Activated CD4-positive, alpha-beta memory T cell treated with anti-CD3 and anti-CD28 coated beads for 36 hours (primary cell): ENCODE measurements at regions of chr1 and their contacts with region 1.

Region 1: GRCh38 chr1:61724813-61725694 is at the start of gene TM2D1:
- DNase-seq: peak; percentile 93
- H3K4me3 Mint-ChIP-seq: peak within 1 kb of the TSS; percentile 98
- H3K27ac Mint-ChIP-seq: peak within 1 kb of the TSS; percentile 99
- H3K4me1 Mint-ChIP-seq: peaks cover 18% of the 10 kb centered on the region
- H3K27me3 Mint-ChIP-seq: no peaks in the 10 kb centered on the region
- total RNA-seq, gene TM2D1: 29.7 to 34.3 TPM

Region 2: GRCh38 chr1:61741711-61742619 is 16.9 kb after region 1 on chr1 and contains the start of gene PATJ:
- CTCF ChIA-PET with region 1: no interaction called
- POLR2A ChIA-PET with region 1: no interaction called
- intact Hi-C with region 1: loop called (anchors 1 kb)
- DNase-seq: peak; percentile 74
- H3K4me3 Mint-ChIP-seq: peak within 1 kb of the TSS; percentile 90
- H3K27ac Mint-ChIP-seq: peak within 1 kb of the TSS; percentile 78
- H3K4me1 Mint-ChIP-seq: peaks cover 24% of the 10 kb centered on the region
- H3K27me3 Mint-ChIP-seq: no peaks in the 10 kb centered on the region
- total RNA-seq, gene PATJ: 13.9 to 16.0 TPM

Region 3: GRCh38 chr1:61782771-61783170 is 57.7 kb after region 1 on chr1:
- CTCF ChIA-PET with region 1: no interaction called
- POLR2A ChIA-PET with region 1: no interaction called
- intact Hi-C with region 1: loop called (anchors 1 kb)
- DNase-seq: peak; percentile 76
- H3K4me3 Mint-ChIP-seq: peak overlapping the region; percentile 10
- H3K27ac Mint-ChIP-seq: peak overlapping the region; percentile 38
- H3K4me1 Mint-ChIP-seq: peaks cover 45% of the 10 kb centered on the region
- H3K27me3 Mint-ChIP-seq: no peaks in the 10 kb centered on the region

Region 4: DNA sequence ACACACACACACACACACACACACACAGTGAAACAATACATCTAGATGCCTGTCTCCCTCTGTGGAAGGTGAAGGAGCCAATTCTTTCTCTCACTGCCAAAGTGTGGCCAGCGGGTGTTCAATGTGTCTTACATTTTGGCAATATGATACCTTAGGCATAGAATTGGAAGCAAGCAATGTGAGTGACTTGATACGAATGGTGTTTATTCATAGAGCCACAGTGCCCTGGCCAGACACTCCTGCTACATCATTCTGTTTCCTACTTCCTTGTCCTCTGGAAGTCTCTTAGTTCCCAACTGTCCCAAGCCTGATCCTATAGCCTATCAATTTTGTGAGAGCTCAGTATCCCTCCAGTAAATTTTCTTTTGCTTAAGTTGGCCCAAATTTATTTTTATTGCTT is 299.6 kb after region 1 on chr1:
- CTCF ChIA-PET with region 1: no interaction called
- POLR2A ChIA-PET with region 1: no interaction called
- intact Hi-C with region 1: no loop called
- DNase-seq: no peak
- H3K4me3 Mint-ChIP-seq: no peak overlapping the region
- H3K27ac Mint-ChIP-seq: no peak overlapping the region
- H3K4me1 Mint-ChIP-seq: no peaks in the 10 kb centered on the region
- H3K27me3 Mint-ChIP-seq: no peaks in the 10 kb centered on the region